ENCODE measurements at regions of chr7 and their contacts with region 1.

Region 1: DNA sequence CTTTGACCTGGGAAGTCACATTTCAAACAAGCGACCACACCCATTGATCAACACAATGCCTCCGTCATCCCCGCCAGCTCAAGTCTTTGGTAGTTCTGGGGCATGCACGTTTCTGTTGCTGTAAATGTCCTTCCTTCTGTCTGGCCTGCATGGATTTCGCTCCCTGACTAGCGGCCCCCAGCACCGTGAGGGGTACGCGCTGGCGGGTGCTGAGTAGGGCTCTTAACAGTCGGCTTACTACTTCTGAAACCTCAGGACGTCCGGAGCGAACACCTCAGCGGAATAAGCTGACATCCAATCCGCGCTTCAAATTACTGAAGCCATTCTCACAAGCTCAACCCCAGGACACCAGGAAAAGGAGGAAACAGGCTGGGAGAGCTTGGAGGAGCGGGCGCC is 505 bp downstream of the NUDCD3 start:
- DNase-seq: peak; percentile 46
- ATAC-seq: peak; percentile 59
- H3K4me3 ChIP-seq: peak overlapping the region; percentile 89
- H3K27ac ChIP-seq: peak overlapping the region; percentile 89
- H3K4me1 ChIP-seq: peaks cover 12% of the 10 kb centered on the region
- H3K27me3 ChIP-seq: no peaks in the 10 kb centered on the region
- CTCF ChIP-seq: no peak

Region 2: GRCh38 chr7:44565097-44565794 is 75.3 kb after region 1 on chr7:
- CTCF ChIA-PET with region 1: interaction called, 5 read pairs
- POLR2A ChIA-PET with region 1: no interaction called
- intact Hi-C with region 1: loop called (anchors 5 kb)
- DNase-seq: peak; percentile 66
- ATAC-seq: peak; percentile 65
- H3K4me3 ChIP-seq: no peak overlapping the region
- H3K27ac ChIP-seq: no peak overlapping the region
- H3K4me1 ChIP-seq: peaks cover 16% of the 10 kb centered on the region
- H3K27me3 ChIP-seq: no peaks in the 10 kb centered on the region
- CTCF ChIP-seq: peak; percentile 89

Region 3: DNA sequence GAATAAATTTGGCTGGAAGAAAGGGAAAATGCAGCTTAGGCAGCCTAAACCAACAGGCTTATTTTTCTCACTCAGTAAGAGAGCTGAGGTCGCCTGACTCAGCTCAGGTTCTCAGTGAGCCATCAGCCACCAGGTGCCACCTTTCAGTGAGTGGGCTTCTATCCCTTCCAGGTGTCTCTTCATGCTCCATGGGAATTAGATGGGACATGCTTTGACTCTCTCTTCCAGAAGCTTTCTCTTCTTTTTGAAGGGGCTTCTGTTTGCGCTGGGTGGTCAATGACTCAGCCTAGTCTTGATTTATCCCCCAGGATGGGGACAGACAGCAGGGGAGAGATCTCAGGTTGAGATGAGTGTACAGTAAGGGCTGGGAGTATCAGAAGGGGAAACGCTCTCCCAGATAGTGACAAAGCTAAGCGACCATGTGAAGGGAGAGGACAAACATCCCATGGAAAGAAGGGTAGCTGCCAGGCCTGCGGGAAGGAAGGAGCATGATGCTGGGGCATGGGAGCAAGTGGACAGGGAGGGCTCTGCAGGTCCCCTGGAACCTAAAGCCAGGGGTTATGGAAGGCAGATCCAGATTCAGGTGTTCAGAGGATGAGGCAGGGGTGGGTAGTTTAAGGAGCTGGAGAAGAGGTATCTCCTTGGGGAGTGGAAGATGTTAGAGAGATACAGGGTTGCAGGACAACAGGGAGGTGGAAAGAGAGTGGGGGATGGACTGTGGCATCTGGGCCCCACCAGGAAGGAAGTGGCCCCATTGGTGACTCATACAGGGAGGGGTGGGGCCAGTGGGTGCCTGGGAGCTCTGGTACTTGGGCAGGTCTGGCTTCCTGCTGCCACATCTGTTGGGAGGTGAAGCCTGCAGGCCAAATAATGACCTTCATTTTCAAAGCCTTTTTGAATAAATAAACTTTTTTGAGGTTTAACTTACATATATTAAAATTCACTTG is 148.9 kb after region 1 on chr7:
- CTCF ChIA-PET with region 1: no interaction called
- POLR2A ChIA-PET with region 1: no interaction called
- intact Hi-C with region 1: no loop called
- DNase-seq: peak; percentile 82
- ATAC-seq: peak; percentile 84
- H3K4me3 ChIP-seq: no peak overlapping the region
- H3K27ac ChIP-seq: peak overlapping the region; percentile 98
- H3K4me1 ChIP-seq: peaks cover 51% of the 10 kb centered on the region
- H3K27me3 ChIP-seq: no peaks in the 10 kb centered on the region
- CTCF ChIP-seq: no peak

Region 4: GRCh38 chr7:44867073-44867995 is 377.4 kb after region 1 on chr7:
- CTCF ChIA-PET with region 1: no interaction called
- POLR2A ChIA-PET with region 1: no interaction called
- intact Hi-C with region 1: no loop called
- DNase-seq: peak; percentile 77
- ATAC-seq: peak; percentile 99
- H3K4me3 ChIP-seq: no peak overlapping the region
- H3K27ac ChIP-seq: no peak overlapping the region
- H3K4me1 ChIP-seq: peaks cover 8% of the 10 kb centered on the region
- H3K27me3 ChIP-seq: no peaks in the 10 kb centered on the region
- CTCF ChIP-seq: no peak